Activated naive CD4-positive, alpha-beta T cell treated with anti-CD3 and anti-CD28 coated beads for 36 hours (primary cell): ENCODE measurements at regions of chr18 and their contacts with region 1.

Region 1: DNA sequence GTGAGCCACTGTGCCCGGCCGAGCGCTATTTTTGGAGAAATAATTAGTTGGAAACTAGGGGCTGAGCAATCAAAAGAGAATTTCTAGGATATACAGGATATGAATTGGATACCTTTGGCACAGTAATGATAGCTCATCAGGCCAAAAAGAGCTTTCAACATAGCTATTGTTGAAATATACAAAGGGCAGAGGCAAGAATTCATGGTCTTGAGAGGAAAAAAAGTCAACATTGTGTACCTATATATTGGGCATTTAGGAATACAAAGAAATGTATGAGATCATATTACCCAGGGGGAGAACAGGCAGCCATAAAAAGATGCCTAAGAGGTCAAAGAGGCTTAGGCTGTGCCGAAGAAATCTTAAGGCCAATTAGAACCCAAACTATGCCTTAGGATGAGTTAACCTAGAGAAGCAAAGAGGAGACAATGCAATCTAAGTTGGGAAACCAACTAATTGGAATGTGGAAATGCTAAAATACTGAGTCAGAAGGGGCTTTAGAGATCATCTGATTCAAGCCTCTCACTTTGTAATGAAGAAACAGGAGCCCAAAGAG is 99.0 kb downstream of the RBBP8 start:
- DNase-seq: no peak
- H3K4me3 Mint-ChIP-seq: no peak overlapping the region
- H3K27ac Mint-ChIP-seq: no peak overlapping the region
- H3K4me1 Mint-ChIP-seq: no peaks in the 10 kb centered on the region
- H3K27me3 Mint-ChIP-seq: no peaks in the 10 kb centered on the region

Region 2: DNA sequence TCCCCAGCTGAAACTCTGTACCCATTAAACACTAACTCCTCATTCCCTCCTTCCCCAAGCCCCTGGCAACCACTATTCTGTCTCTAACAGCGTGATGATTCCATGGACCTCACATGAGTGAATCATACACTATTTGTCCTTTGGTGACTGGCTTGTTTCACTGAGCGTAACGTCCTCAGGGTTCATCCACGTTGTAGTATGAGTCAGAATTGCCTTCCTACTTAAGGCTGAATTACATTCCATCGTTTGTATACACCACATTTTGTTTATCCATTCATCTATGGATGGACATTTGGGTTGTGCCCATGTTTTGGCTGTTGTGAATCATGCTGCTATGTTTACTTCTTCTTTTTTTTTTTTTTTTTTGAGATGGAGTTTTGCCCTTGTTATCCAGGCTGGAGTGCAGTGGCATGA is 83.6 kb after region 1 on chr18:
- CTCF ChIA-PET with region 1: interaction called, 5 read pairs
- intact Hi-C with region 1: loop called (anchors 5 kb)
- DNase-seq: no peak
- H3K4me3 Mint-ChIP-seq: no peak overlapping the region
- H3K27ac Mint-ChIP-seq: no peak overlapping the region
- H3K4me1 Mint-ChIP-seq: peaks cover 15% of the 10 kb centered on the region
- H3K27me3 Mint-ChIP-seq: no peaks in the 10 kb centered on the region

Region 3: GRCh38 chr18:23377669-23378301 is 345.7 kb after region 1 on chr18:
- CTCF ChIA-PET with region 1: no interaction called
- intact Hi-C with region 1: loop called (anchors 10 kb)
- DNase-seq: peak; percentile 20
- H3K4me3 Mint-ChIP-seq: no peak overlapping the region
- H3K27ac Mint-ChIP-seq: peak overlapping the region; percentile 53
- H3K4me1 Mint-ChIP-seq: peaks cover 16% of the 10 kb centered on the region
- H3K27me3 Mint-ChIP-seq: no peaks in the 10 kb centered on the region

Region 4: GRCh38 chr18:23406271-23406787 is 374.2 kb after region 1 on chr18:
- CTCF ChIA-PET with region 1: no interaction called
- intact Hi-C with region 1: loop called (anchors 1 kb)
- DNase-seq: no peak
- H3K4me3 Mint-ChIP-seq: no peak overlapping the region
- H3K27ac Mint-ChIP-seq: no peak overlapping the region
- H3K4me1 Mint-ChIP-seq: no peaks in the 10 kb centered on the region
- H3K27me3 Mint-ChIP-seq: no peaks in the 10 kb centered on the region